Psoas muscle (tissue), 8 donors: ENCODE measurements at regions of chr3 and their contacts with region 1.

Region 1: GRCh38 chr3:197224034-197224444 is 74.4 kb downstream of the DLG1 start:
- DNase-seq: no peak
- ATAC-seq: peak in 3 of 4 donors; percentile 51 to 74 (median 66)
- H3K4me3 ChIP-seq: no peak overlapping the region
- H3K27ac ChIP-seq: no peak overlapping the region
- H3K4me1 ChIP-seq: peaks cover 37% of the 10 kb centered on the region
- H3K27me3 ChIP-seq: no peaks in the 10 kb centered on the region
- CTCF ChIP-seq: peak; percentile 57

Region 2: DNA sequence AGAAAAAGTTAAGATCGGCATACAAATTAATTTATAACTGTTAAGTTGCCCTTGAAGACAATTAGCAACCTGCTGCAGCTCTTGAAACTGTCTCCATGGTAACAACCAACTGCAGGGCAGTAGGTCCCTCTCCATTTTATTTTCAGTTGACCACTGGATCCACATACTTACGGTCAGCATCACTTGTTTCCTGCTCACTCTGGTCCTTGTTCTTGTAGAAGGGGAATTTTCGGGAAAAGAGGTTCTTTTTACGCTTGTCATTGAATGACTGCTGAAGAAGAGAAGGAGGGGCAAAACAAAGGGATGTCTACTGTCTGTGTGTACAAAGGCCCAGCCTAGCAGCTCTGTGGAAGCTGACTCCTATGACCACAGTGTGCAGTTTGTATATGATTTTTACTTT is 147.6 kb before region 1 on chr3:
- intact Hi-C with region 1: no loop called
- DNase-seq: no peak
- ATAC-seq: no peak
- H3K4me3 ChIP-seq: no peak overlapping the region
- H3K27ac ChIP-seq: no peak overlapping the region
- H3K4me1 ChIP-seq: no peaks in the 10 kb centered on the region
- H3K27me3 ChIP-seq: no peaks in the 10 kb centered on the region
- CTCF ChIP-seq: no peak

Region 3: DNA sequence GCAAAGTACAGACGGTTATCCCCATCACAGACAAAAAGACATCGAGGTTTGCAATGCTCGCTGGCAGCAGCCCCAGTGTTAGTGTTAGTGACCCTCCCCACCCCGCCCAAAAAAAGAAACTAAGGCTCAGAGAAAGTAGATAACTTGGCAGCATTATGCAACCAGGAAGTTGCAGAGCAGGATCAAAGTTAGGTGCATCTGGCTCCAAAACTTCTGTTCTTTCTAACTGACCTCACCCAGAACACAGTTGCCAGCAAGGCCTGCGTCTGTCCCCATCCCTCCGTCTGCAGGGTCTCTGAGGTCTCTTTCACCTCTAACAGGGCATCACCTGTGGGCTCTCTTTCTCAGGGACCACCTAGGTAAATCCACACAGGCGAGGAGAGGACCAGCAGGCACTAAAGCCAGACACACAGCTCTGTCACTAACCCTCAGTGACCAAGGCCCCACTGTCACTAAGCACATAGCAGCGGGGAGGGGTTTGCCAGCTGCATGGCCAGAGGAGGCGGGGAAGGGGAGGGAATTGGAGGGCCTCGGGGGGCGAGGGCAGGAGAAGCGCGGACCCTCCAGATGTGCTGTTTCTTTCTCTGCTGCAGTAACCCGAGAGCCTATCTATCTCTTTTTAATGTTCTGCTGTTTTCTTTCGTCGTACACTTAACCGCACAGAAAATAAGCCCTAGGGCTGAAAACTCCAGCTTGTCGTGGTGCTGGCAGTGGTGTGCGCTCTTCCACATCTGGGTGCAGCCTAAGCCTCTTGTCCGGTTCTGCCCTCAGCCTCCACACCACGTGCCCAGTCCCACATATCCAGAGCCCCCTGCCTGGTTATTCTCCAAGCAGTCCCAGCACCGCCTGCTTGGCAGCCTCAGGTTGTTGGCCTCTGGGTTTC is 280.4 kb after region 1 on chr3:
- intact Hi-C with region 1: loop called in 1 of 2 experiments (anchors 5 kb)
- DNase-seq: no peak
- ATAC-seq: no peak
- H3K4me3 ChIP-seq: no peak overlapping the region
- H3K27ac ChIP-seq: no peak overlapping the region
- H3K4me1 ChIP-seq: no peaks in the 10 kb centered on the region
- H3K27me3 ChIP-seq: peaks cover 0 to 4% (median 0%) of the 10 kb centered on the region in 3 donors
- CTCF ChIP-seq: no peak

Region 4: DNA sequence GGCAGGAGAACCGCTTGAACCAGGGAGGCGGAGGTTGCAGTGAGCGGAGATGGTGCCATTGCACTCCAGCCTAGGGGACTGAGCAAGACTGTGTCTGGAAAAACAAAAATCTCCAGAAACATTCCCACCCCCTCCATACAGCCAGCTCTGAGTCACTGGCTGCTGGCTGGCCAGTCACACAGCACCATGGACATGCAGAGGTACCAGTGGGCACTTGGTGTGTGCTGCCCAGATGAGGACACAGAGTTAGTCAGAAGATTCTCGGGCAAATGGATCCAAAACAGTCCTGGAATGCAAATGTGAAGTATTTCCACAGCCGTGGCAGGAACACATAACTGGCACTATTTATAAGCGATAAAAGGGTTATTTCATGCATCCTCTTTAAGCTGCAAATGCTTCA is 287.1 kb after region 1 on chr3:
- intact Hi-C with region 1: loop called (anchors 2 to 5 kb)
- DNase-seq: no peak
- ATAC-seq: no peak
- H3K4me3 ChIP-seq: no peak overlapping the region
- H3K27ac ChIP-seq: no peak overlapping the region
- H3K4me1 ChIP-seq: no peaks in the 10 kb centered on the region
- H3K27me3 ChIP-seq: peaks cover 0 to 4% (median 0%) of the 10 kb centered on the region in 3 donors
- CTCF ChIP-seq: no peak